AG04449 (cell line): ENCODE measurements at regions of chr2 and their contacts with region 1.

Region 1: DNA sequence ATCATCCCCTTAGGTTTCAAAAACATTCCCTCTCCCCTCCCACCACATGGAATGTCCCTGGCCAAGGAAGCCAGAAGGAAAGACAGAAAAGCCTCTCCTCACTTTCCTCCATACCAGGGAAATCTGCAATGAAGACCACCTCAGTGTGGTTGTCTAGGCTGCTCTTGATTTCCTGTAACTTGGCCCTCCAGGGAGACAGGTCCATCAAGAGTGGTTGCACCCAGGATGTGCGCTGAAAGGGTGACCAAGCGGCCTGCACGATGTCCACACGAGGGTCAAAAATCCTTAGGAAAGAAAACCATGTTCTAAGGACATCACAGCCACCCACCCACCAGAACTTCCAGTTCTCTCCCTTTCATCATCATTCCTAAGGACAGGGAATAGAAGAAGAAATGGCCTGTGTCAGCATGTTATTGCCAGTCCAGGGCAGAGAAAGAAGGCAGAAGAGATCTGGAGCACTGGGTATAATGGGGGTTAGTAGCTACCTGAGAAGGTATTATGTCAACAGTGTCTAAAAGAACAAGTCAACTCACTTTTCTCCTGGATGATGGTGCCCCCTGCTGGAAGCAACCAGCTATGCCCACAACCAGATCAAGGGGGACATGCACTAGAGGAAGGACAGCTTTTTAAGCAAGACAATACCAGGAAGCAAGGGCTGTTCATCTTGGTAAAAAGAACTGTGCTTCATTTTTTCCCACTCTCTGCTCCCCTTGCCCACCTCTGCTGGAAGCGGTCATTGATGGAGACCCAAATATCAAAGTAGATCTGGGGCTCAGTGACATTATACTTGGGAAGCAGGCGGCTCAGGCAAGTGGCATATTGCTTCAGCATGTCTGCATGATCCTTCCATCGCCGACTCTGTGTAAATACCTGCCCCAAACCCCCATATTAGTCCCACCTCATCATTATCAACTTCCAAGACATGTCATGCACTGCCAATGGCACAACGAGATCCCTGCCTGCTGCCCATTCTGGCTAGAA is 9.3 kb downstream of the GGCX start:
- DNase-seq: no peak
- H3K4me3 ChIP-seq: no peak overlapping the region
- CTCF ChIP-seq: peak; percentile 81

Region 2: GRCh38 chr2:85327822-85328617 is 224.0 kb before region 1 on chr2 and contains the start of gene TGOLN2:
- CTCF ChIA-PET with region 1: interaction called, 15 read pairs
- POLR2A ChIA-PET with region 1: interaction called, 4 read pairs
- DNase-seq: no peak
- H3K4me3 ChIP-seq: peak within 1 kb of the TSS; percentile 87
- CTCF ChIP-seq: no peak

Region 3: DNA sequence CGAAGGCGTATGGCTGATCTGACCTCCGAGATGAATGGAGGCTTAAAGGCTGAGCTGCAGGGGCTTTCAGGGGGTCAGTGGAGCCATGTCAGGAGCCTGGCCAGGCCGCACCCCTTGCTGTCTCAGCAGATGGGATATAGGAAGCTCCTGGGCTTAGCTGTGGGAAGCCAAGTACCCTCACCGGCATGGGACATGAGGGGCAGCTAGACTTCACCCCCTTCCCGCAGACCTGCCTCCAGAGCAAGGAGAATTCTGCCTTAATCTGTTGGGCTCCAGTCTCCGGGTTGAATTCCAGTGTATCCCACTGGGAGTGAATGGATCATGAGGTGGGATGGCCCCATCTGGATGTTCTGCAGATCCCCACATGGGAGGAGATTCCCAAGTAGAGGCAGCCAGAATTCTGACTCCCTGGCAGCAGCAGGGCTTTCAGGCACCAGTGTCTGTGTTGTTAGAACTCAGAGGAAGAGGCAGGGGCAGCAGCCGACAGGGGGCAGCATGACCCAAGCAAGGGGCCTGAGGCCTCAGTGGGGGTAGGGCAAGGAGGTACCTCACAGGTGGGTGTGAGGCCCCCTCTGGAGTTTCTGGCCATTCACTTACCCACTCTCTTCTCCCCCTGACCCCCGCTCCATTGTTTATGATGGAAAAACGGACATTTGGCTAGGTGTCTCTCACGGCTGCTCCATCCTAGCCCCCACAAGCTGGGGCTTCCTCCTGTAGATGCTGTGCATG is 160.9 kb before region 1 on chr2:
- CTCF ChIA-PET with region 1: interaction called, 124 read pairs
- POLR2A ChIA-PET with region 1: interaction called, 3 read pairs
- DNase-seq: no peak
- H3K4me3 ChIP-seq: no peak overlapping the region
- CTCF ChIP-seq: peak; percentile 78

Region 4: DNA sequence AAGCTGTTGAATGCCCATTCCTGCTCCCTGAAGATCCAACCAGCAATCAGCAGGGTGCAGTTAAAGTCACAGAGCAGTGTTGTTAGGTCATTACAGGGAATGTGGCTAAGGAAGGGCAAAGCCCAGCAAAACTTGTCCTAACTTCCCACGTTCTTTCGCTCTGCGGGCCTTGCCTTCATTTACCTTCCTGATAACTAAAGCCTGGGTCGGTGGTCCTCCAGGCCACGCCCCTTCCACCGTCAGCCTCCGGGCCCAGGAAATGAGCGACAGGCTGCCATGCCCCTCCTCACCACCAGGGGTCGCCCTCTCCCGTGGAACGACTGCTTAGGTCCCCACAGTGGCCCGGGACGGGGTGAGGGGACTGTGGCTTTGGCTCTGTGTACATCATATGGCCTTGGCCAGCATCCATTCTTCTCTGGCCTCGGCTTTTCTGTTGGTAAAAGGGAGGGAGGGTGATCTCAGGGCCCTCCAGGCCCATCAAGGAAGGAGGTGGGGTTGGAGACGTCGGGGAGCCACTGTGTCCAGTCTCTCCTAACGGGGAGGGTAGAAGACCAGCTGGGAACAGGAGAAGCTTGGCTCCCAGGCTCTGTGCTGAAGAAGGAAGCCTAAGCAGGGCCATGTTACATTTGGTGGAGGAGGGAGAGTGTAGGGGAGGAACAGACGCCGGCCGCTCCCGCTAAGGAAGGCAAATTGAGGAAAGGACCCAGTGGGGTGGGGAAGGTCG is 131.3 kb before region 1 on chr2:
- CTCF ChIA-PET with region 1: interaction called, 922 read pairs
- POLR2A ChIA-PET with region 1: interaction called, 27 read pairs
- DNase-seq: no peak
- H3K4me3 ChIP-seq: no peak overlapping the region
- CTCF ChIP-seq: peak; percentile 98